ENCODE measurements at regions of chr15 and their contacts with region 1.

Region 1: GRCh38 chr15:76470691-76471090 is 134.1 kb downstream of the ISL2 start:
- DNase-seq: no peak
- H3K4me3 Mint-ChIP-seq: no peak overlapping the region
- H3K27ac Mint-ChIP-seq: no peak overlapping the region
- H3K4me1 Mint-ChIP-seq: no peaks in the 10 kb centered on the region
- H3K27me3 Mint-ChIP-seq: no peaks in the 10 kb centered on the region
- CTCF ChIP-seq: no peak

Region 2: DNA sequence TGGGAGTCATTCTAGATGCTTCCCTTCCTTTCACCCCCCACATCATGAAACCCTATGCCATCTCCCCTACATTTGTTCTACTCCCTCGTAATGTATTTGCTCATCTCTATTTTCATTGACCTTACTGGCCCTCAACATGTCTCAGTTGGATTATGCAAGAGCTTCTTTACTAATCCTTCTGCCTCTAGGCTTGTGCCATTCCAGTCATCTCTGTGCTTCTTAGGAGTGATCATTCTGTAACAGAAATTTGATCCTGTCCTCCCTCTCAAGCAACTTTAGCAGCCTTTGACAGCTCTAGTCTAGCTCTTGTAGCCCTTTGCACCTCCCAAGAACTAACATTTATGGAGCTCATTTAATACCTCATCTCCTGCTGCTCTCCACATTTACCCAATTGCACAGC is 69.4 kb before region 1 on chr15:
- CTCF ChIA-PET with region 1: no interaction called
- intact Hi-C with region 1: no loop called
- DNase-seq: no peak
- H3K4me3 Mint-ChIP-seq: no peak overlapping the region
- H3K27ac Mint-ChIP-seq: no peak overlapping the region
- H3K4me1 Mint-ChIP-seq: no peaks in the 10 kb centered on the region
- H3K27me3 Mint-ChIP-seq: no peaks in the 10 kb centered on the region
- CTCF ChIP-seq: no peak

Region 3: DNA sequence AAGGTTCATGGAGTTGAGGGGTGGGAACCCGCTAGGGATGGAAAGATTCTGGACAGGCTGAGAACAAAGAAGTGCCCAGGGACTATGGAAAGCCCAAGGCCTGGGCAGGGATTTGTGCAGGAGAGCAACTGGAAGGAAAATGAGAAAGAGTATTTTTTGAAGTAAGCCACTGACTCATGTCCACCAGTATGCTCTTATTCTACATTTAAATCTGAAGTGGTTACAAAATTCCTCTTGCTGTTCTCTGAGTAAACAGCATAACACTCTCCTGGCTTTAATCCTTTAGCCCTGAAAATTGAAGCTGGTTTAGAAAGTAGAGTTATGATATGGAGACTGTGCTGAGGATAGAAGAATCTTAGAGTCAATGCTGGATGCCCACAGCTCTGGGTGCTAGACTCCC is 31.0 kb after region 1 on chr15:
- CTCF ChIA-PET with region 1: no interaction called
- intact Hi-C with region 1: no loop called
- DNase-seq: no peak
- H3K4me3 Mint-ChIP-seq: no peak overlapping the region
- H3K27ac Mint-ChIP-seq: no peak overlapping the region
- H3K4me1 Mint-ChIP-seq: no peaks in the 10 kb centered on the region
- H3K27me3 Mint-ChIP-seq: no peaks in the 10 kb centered on the region
- CTCF ChIP-seq: no peak

Region 4: DNA sequence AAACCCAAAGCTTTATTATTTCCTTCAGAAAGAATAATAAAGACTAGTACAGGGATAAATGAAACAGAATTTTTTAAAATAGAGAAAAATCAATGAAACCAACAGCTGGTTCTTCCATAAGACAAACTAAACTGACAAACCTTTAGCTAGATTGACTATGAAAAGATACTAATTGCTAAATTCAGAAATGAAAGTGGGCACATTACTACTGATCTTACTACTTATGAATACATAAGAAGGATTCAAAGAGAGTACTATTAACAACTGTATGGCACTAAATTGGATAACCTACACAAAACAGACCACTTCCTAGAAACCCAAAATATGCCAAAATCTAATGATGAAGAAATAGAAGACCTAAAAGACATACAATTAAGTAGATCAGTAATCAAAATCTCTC is 144.0 kb after region 1 on chr15:
- CTCF ChIA-PET with region 1: no interaction called
- intact Hi-C with region 1: no loop called
- DNase-seq: no peak
- H3K4me3 Mint-ChIP-seq: no peak overlapping the region
- H3K27ac Mint-ChIP-seq: no peak overlapping the region
- H3K4me1 Mint-ChIP-seq: peaks cover 5% of the 10 kb centered on the region
- H3K27me3 Mint-ChIP-seq: no peaks in the 10 kb centered on the region
- CTCF ChIP-seq: no peak

Region 5: GRCh38 chr15:76737573-76737972 is 266.9 kb after region 1 on chr15:
- CTCF ChIA-PET with region 1: interaction called, 10 read pairs
- intact Hi-C with region 1: no loop called
- DNase-seq: no peak
- H3K4me3 Mint-ChIP-seq: no peak overlapping the region
- H3K27ac Mint-ChIP-seq: no peak overlapping the region
- H3K4me1 Mint-ChIP-seq: no peaks in the 10 kb centered on the region
- H3K27me3 Mint-ChIP-seq: no peaks in the 10 kb centered on the region
- CTCF ChIP-seq: no peak

Measured in Calu3 (cell line).